HepG2 (cell line): ENCODE measurements at regions of chr10 and their contacts with region 1.

Region 1: GRCh38 chr10:110857265-110858158 is 14.2 kb upstream of the PDCD4 start:
- DNase-seq: peak; percentile 59
- ATAC-seq: peak; percentile 67
- H3K4me3 ChIP-seq: peak overlapping the region; percentile 4 to 53 (median 51); a peak in 4 of 6 replicates
- H3K27ac ChIP-seq: peak overlapping the region; percentile 5
- H3K4me1 ChIP-seq: peaks cover 68% of the 10 kb centered on the region
- H3K27me3 ChIP-seq: no peaks in the 10 kb centered on the region; a peak in 1 of 5 replicates
- CTCF ChIP-seq: no peak
- EP300 ChIP-seq: peak in 1 of 2 experiments; percentile 49; a peak in 1 of 4 replicates
- POLR2A ChIP-seq: no peak
- RAD21 ChIP-seq: no peak

Region 2: DNA sequence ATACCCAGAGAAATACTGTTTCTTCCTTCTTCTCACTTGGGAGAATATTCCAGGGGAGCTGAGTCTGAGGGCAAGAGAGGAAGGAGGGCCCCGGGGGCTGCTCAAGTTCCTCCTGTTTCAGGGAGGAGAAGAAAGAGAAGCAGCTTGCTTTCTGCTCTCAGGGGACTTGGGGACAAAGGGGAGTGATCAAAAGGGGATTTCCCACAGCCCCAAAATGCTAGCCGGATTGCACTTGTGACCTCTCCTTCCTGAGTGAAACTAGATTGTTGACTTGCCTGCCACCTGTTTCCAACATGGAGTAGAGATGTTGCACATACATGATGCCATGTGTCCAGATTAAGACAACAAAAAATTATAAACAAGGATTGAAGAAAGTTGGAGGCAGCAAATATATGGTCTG is 14.5 kb before region 1 on chr10:
- CTCF ChIA-PET with region 1: no interaction called
- POLR2A ChIA-PET with region 1: interaction called, 44 read pairs
- in situ Hi-C with region 1: no loop called
- intact Hi-C with region 1: no loop called
- DNase-seq: no peak
- ATAC-seq: no peak
- H3K4me3 ChIP-seq: no peak overlapping the region
- H3K27ac ChIP-seq: peak overlapping the region; percentile 17
- H3K4me1 ChIP-seq: peaks cover 97% of the 10 kb centered on the region
- H3K27me3 ChIP-seq: no peaks in the 10 kb centered on the region
- CTCF ChIP-seq: no peak
- EP300 ChIP-seq: no peak
- POLR2A ChIP-seq: no peak
- RAD21 ChIP-seq: no peak

Region 3: GRCh38 chr10:110883924-110884323 is 26.4 kb after region 1 on chr10:
- CTCF ChIA-PET with region 1: no interaction called
- POLR2A ChIA-PET with region 1: no interaction called
- in situ Hi-C with region 1: no loop called
- intact Hi-C with region 1: no loop called
- DNase-seq: no peak
- ATAC-seq: no peak
- H3K4me3 ChIP-seq: no peak overlapping the region
- H3K27ac ChIP-seq: no peak overlapping the region
- H3K4me1 ChIP-seq: peaks cover 8% of the 10 kb centered on the region
- H3K27me3 ChIP-seq: no peaks in the 10 kb centered on the region
- CTCF ChIP-seq: no peak
- EP300 ChIP-seq: no peak
- POLR2A ChIP-seq: no peak
- RAD21 ChIP-seq: no peak

Region 4: DNA sequence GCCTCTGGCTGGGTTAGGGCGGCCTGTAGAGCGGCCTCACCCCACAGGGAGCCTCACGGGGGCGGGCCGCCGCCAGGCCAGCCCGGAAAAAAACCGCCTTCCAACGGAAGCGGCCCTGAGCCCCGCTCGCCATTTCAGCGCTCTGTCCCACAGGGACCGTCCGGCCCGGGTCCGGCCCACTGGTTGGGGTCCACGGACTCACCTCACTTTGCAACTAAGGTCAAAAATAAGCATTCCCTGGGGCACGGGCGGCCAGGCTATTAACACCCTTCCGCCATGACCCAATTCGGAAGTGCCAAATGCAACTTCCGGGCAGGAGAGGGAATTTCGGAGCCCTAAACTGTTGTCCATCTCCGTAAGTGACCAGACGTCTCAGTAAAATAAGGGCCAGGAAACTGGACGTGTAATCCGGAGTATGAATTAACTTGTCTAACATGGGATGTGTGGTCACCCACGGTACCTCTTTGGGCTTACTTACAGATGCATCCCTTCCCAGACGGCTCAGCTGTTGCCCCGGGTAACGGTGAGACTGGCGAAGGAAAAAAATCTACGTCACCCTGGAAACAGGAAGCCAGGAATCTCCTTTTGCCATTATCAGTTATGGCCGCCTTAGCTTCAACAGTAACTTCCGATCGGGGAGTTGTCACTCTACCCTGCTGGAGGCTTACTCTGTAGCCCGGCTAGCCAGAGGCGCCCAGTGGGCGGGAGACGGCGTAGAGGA is 61.3 kb after region 1 on chr10 and contains the start of gene BBIP1:
- CTCF ChIA-PET with region 1: no interaction called
- POLR2A ChIA-PET with region 1: interaction called, 13 read pairs
- in situ Hi-C with region 1: no loop called
- intact Hi-C with region 1: no loop called
- DNase-seq: peak; percentile 99
- ATAC-seq: peak; percentile 96
- H3K4me3 ChIP-seq: peak within 1 kb of the TSS; percentile 83 to 93 (median 89)
- H3K27ac ChIP-seq: peak within 1 kb of the TSS; percentile 97
- H3K4me1 ChIP-seq: peaks cover 43% of the 10 kb centered on the region
- H3K27me3 ChIP-seq: no peaks in the 10 kb centered on the region; a peak in 1 of 5 replicates
- CTCF ChIP-seq: peak; percentile 40
- EP300 ChIP-seq: 0 out of 4 replicates have a peak, but pooled peaks of 1 of the 2 experiments have one; percentile 28
- POLR2A ChIP-seq: peak; percentile 58 to 77; a peak in 3 of 4 replicates
- RAD21 ChIP-seq: peak; percentile 59
- total RNA-seq, gene BBIP1: 24.1 and 28.9 TPM in 2 replicates